ENCODE measurements at regions of chr5 and their contacts with region 1.

Region 1: DNA sequence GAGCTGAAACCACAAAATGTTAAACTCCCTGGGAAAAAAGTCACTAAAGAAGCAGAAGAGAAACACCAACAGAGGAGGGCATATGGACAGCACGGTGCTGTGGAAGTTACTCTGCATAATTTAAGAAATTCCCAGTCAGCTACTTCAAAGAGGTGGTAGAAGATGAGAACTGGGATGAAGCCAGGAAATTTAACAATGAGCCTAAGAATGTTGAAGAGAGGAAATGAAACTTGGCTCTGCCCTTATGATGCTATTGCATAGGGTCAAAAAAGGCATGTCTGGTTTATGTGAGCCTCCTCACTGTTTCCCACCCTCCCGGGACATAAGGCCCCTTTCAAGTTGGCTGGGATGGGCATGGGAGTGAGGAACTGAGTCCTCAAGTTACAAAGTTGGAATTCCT is 25.4 kb upstream of the SNX18 start:
- DNase-seq: no peak
- H3K4me3 ChIP-seq: no peak overlapping the region
- H3K27me3 ChIP-seq: peaks cover 2% of the 10 kb centered on the region; the same call in 1 of the 2 replicates
- CTCF ChIP-seq: no peak

Region 2: DNA sequence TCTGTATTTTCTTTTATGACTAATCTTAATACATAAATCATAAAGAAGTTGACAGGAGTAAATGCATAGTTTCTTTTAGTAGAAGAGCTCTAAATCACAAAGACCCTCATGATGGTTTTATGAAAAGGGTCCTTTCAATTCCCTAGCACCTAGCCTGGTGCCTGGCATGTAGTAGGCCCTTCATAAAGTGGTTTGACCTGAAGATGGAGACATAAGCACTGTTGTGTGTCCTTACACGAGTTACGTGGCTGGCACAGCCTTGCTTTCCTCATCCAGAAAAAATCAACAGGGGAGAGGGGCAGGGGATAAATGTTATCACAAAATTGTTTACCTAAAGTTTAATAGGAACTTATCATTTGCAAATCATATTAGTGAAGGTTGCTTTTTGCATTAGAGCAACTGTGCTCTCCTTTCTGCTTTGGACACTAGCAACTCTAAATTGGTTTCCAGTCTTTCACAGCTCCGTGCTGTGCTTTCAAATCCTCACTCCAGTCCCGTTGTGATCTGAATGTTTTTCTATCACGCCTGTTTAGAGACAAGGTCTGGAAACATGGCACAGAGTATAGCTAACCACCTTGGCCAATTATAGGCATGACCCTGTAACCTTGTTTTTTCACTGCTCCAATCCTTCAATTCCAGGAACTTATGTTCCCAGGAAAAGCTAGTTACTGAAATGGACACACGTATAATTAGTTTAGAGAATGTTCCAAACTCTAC is 237.5 kb before region 1 on chr5:
- CTCF ChIA-PET with region 1: interaction called, 16 read pairs
- POLR2A ChIA-PET with region 1: no interaction called
- DNase-seq: no peak
- H3K4me3 ChIP-seq: no peak overlapping the region
- H3K27me3 ChIP-seq: no peaks in the 10 kb centered on the region
- CTCF ChIP-seq: no peak

Region 3: GRCh38 chr5:54360089-54360488 is 132.1 kb before region 1 on chr5:
- CTCF ChIA-PET with region 1: interaction called, 6 read pairs
- POLR2A ChIA-PET with region 1: interaction called, 23 read pairs
- DNase-seq: no peak
- H3K4me3 ChIP-seq: no peak overlapping the region
- H3K27me3 ChIP-seq: no peaks in the 10 kb centered on the region
- CTCF ChIP-seq: no peak

Region 4: GRCh38 chr5:54425258-54425657 is 66.9 kb before region 1 on chr5:
- CTCF ChIA-PET with region 1: interaction called, 16 read pairs
- POLR2A ChIA-PET with region 1: no interaction called
- DNase-seq: no peak
- H3K4me3 ChIP-seq: no peak overlapping the region
- H3K27me3 ChIP-seq: peaks cover 3% of the 10 kb centered on the region
- CTCF ChIP-seq: no peak

Region 5: DNA sequence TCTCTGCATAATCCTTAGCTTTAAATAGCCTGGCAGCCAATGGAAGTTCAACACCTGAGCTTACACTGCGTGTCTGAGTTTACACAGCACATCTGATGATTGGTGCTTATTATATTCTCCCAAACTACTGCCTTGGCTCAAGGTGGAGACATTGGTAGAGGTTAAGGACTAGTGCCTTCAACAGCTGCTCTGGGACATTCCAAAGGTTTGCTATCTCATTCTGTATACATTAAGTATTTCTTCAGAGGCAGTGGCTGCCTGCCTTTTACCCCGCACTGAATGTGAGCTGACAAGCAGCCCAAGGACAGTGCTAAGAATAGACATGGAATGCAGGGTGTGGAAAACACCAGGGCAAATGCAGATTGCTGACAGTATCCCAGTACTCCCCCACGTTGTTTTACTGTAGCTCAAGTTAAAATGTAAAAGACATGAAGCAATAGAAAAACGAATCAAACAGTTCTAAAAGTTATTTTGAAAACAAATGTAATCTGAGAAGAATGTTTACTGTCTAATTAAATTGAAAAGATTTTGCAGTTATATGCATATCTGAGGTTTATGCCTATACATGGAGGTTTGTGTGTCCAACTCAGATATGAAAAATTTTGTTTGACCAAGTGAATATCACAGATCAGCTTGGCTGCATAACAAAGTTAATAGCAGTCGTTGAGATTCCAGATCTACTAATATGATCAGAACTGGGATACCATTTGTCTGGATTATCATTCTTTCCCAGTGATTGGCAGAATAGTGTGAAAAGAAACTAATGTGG is 34.9 kb before region 1 on chr5:
- CTCF ChIA-PET with region 1: interaction called, 28 read pairs
- POLR2A ChIA-PET with region 1: no interaction called
- DNase-seq: peak; percentile 51
- H3K4me3 ChIP-seq: peak overlapping the region; percentile 27
- H3K27me3 ChIP-seq: no peaks in the 10 kb centered on the region
- CTCF ChIP-seq: no peak

Region 6: DNA sequence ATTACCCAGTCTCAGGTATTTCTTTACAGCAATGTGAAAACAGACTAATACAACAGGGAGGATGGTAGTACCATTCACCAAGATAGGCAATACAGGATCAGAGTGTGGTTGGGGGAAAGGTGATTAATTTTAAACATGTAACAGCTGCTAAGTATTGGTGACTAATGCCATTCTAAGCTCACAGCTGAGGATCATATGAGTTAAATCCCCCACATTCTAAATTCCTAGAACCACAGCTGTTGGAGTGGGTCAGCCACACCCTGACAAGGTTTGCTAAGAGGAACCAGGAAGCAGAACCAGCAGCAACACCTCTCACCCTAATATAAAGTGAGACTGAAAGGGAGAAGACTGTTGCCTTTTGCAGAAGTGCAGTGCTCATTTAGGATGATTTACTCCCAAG is 11.9 kb before region 1 on chr5:
- CTCF ChIA-PET with region 1: interaction called, 28 read pairs
- POLR2A ChIA-PET with region 1: no interaction called
- DNase-seq: no peak
- H3K4me3 ChIP-seq: no peak overlapping the region
- H3K27me3 ChIP-seq: no peaks in the 10 kb centered on the region
- CTCF ChIP-seq: no peak